MCF 10A (cell line): ENCODE measurements at regions of chr11 and their contacts with region 1.

Region 1: DNA sequence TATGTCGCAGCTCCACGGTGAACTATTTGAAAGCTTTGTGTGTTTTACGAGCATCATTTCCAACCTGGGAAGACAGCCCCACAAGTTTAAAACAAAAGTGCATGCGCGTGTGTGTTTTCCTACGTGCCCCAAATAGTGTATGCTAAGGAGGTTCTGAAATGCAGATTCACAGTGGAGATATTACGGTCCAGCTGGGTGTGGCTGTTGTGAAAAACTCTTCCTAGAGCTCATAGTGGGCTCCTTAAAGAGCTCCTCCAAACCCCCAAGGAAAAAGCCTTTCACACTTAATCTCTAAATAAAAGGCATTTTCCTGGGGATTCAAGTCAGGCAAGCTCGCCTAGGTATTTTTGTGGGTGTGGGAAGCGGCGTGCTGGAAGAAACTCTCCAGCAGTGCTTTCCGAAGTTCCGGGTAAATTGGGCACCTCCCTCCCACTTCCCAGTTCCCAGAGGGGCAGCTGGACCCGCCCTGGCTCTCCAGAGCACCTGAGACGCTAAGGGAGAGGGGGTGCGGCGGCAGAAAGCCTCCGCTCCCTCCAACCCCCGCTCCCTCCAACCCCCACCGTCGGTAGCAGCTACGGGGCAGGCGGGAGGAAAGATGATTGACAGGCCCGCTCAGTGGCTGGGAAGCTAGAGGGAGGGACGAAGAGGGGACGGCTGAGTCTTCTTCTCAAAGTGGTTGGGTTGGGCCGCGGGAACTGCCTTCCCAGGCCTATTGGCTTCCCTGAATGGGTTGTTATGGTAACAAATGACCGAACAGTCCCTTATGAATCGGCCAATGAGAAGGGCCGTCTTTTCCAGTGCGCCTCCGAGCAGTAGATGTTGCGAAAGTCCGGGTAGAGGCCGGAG is 558 bp upstream of the PCF11 start:
- DNase-seq: peak; percentile 100
- H3K4me3 Mint-ChIP-seq: peak overlapping the region; percentile 98
- H3K27ac Mint-ChIP-seq: peak overlapping the region; percentile 100
- H3K4me1 Mint-ChIP-seq: peaks cover 7% of the 10 kb centered on the region
- H3K27me3 Mint-ChIP-seq: no peaks in the 10 kb centered on the region
- CTCF ChIP-seq: no peak

Region 2: GRCh38 chr11:83025267-83025720 is 131.1 kb before region 1 on chr11:
- CTCF ChIA-PET with region 1: no interaction called
- POLR2A ChIA-PET with region 1: interaction called, 21 read pairs
- intact Hi-C with region 1: no loop called
- DNase-seq: peak; percentile 71
- H3K4me3 Mint-ChIP-seq: no peak overlapping the region
- H3K27ac Mint-ChIP-seq: peak overlapping the region; percentile 19
- H3K4me1 Mint-ChIP-seq: peaks cover 16% of the 10 kb centered on the region
- H3K27me3 Mint-ChIP-seq: no peaks in the 10 kb centered on the region
- CTCF ChIP-seq: no peak

Region 3: GRCh38 chr11:83051760-83052671 is 104.4 kb before region 1 on chr11:
- CTCF ChIA-PET with region 1: interaction called, 4 read pairs
- POLR2A ChIA-PET with region 1: interaction called, 71 read pairs
- intact Hi-C with region 1: no loop called
- DNase-seq: peak; percentile 92
- H3K4me3 Mint-ChIP-seq: peak overlapping the region; percentile 43
- H3K27ac Mint-ChIP-seq: peak overlapping the region; percentile 84
- H3K4me1 Mint-ChIP-seq: peaks cover 50% of the 10 kb centered on the region
- H3K27me3 Mint-ChIP-seq: no peaks in the 10 kb centered on the region
- CTCF ChIP-seq: no peak

Region 4: DNA sequence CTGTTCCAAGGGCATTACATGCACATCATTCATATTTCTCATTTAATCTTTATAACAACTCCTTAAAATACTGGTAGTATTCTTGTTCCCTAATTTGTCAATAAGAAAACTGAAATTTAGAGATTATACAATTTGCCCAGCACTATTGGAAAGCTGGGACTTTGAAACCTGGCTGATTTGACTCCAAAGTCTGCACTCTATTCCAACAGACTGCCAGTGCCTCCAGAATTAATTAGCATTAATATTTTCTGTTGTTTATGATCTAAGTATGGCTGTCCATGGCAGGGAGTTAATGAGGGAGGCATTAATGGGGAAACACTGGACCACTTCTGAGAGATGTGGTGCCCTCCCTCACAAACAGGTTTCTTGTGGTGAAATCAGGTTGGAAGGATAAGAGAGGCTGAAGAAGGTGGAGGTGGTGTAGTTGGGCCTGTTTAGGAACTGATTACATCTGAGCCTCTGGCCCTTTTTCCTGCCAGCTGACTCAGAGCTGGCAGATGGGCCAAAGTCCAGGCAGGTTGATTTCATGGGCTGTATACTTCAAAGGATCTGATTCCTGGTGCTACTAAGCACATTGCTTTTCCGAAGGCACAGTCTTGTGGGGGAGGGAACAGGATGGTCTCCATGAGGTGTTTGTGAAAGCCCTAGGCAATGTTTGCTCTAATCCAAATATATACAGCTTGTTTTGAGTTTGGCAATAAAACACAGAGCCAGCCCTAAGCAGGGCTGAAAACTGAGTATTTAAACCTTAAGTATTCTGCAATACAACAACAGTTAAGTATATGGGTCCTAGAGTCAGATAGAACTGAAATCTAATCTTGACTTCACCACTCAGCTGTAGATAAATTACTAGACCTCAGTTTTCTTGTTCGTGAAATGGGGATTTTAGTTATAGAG is 63.6 kb before region 1 on chr11:
- CTCF ChIA-PET with region 1: interaction called, 4 read pairs
- POLR2A ChIA-PET with region 1: interaction called, 56 read pairs
- intact Hi-C with region 1: loop called (anchors 2 kb)
- DNase-seq: peak; percentile 64
- H3K4me3 Mint-ChIP-seq: no peak overlapping the region
- H3K27ac Mint-ChIP-seq: peak overlapping the region; percentile 84
- H3K4me1 Mint-ChIP-seq: peaks cover 9% of the 10 kb centered on the region
- H3K27me3 Mint-ChIP-seq: no peaks in the 10 kb centered on the region
- CTCF ChIP-seq: no peak

Region 5: DNA sequence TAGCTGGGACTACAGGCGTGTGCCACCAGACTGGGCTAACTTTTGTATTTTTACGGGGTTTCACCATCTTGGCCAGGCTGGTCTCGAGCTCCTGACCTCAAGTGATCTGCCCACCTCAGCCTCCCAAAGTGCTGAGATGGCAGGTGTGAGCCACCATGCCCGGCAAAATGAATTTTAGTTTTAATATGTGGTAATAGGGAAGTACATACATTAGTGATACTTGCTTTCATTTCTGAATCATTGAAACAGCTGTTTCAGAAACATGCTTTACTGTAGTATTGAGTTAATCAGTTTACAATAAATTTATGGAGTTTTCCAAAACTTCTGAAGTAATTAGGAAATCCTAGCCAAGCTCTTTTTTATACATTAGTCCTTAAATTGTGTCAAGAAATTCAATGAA is 16.2 kb after region 1 on chr11:
- CTCF ChIA-PET with region 1: interaction called, 4 read pairs
- POLR2A ChIA-PET with region 1: interaction called, 48 read pairs
- intact Hi-C with region 1: no loop called
- DNase-seq: no peak
- H3K4me3 Mint-ChIP-seq: no peak overlapping the region
- H3K27ac Mint-ChIP-seq: no peak overlapping the region
- H3K4me1 Mint-ChIP-seq: peaks cover 31% of the 10 kb centered on the region
- H3K27me3 Mint-ChIP-seq: no peaks in the 10 kb centered on the region
- CTCF ChIP-seq: no peak

Region 6: GRCh38 chr11:83193315-83194280 is 37.2 kb after region 1 on chr11 and contains the start of gene ANKRD42:
- CTCF ChIA-PET with region 1: no interaction called
- POLR2A ChIA-PET with region 1: interaction called, 91 read pairs
- intact Hi-C with region 1: loop called (anchors 2 kb)
- DNase-seq: peak; percentile 97
- H3K4me3 Mint-ChIP-seq: peak within 1 kb of the TSS; percentile 94
- H3K27ac Mint-ChIP-seq: peak within 1 kb of the TSS; percentile 92
- H3K4me1 Mint-ChIP-seq: peaks cover 34% of the 10 kb centered on the region
- H3K27me3 Mint-ChIP-seq: no peaks in the 10 kb centered on the region
- CTCF ChIP-seq: no peak
- total RNA-seq, gene ANKRD42: 8.6 and 13.5 TPM in 2 replicates

Region 7: DNA sequence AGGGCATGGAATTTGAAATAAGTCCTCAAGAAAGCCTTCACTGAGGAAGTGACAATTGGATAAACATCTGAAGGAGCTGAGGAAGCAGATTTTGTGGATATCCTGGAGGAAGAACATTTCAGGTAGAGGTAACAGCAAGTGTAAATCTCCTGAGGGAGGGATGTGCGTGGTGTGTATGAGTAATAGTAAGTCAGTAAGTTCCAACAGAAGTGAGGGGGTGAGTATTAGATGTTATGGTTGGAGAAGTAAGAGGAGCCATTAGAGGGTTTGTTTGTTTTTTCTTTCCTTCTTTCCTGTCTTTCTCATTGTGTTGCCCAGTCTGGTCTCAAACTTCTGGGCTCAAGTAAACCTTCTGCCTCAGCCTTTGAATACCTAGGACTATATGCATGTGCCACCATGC is 66.1 kb after region 1 on chr11:
- CTCF ChIA-PET with region 1: no interaction called
- POLR2A ChIA-PET with region 1: no interaction called
- intact Hi-C with region 1: no loop called
- DNase-seq: no peak
- H3K4me3 Mint-ChIP-seq: no peak overlapping the region
- H3K27ac Mint-ChIP-seq: no peak overlapping the region
- H3K4me1 Mint-ChIP-seq: peaks cover 6% of the 10 kb centered on the region
- H3K27me3 Mint-ChIP-seq: no peaks in the 10 kb centered on the region
- CTCF ChIP-seq: no peak